ENCODE measurements at regions of chr7 and their contacts with region 1.

Region 1: DNA sequence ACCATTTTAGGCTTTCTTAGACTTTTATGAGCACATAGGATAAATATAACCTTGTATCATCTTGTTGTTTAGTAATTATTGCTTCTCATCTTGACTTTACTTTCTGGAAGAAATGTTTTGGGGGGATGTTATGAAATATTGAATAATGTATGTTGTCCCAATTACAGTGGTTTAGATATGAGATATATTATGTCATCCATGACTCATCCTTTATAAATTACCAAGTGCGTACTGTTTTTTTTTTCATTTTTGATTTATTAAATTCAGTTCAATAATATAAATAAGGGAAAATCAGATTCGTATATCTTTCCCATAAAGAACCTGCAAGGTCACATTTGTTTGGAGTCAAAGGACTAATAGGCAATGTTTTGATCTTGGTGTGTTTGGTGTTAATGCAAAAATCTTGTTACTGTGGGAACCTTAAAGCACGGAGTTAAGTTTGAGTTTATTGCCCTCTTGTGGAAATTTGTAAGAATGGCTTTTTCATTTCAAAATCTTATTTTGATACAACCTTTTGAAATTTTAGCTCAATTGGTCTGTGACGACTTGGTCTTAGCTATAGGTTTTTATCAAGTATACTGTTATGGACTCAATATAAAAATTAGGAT is 108.6 kb downstream of the SRI start:
- DNase-seq: no peak
- ATAC-seq: peak; percentile 74
- H3K4me3 ChIP-seq: no peak overlapping the region
- H3K27ac ChIP-seq: no peak overlapping the region
- H3K4me1 ChIP-seq: no peaks in the 10 kb centered on the region
- H3K27me3 ChIP-seq: no peaks in the 10 kb centered on the region
- CTCF ChIP-seq: peak; percentile 34 to 61 (median 44); a peak in 5 of 6 replicates
- EP300 ChIP-seq: no peak
- POLR2A ChIP-seq: no peak
- RAD21 ChIP-seq: peak; percentile 83

Region 2: GRCh38 chr7:87506246-87507180 is 604.7 kb before region 1 on chr7:
- CTCF ChIA-PET with region 1: interaction called, 17 read pairs
- POLR2A ChIA-PET with region 1: no interaction called
- RAD21 ChIA-PET with region 1: interaction called, 10 read pairs
- SMC1A ChIA-PET with region 1: interaction called, 5 read pairs
- in situ Hi-C with region 1: loop called (anchors 10 kb)
- intact Hi-C with region 1: loop called (anchors 5 kb)
- DNase-seq: no peak
- ATAC-seq: peak; percentile 57
- H3K4me3 ChIP-seq: no peak overlapping the region
- H3K27ac ChIP-seq: no peak overlapping the region
- H3K4me1 ChIP-seq: no peaks in the 10 kb centered on the region
- H3K27me3 ChIP-seq: no peaks in the 10 kb centered on the region
- CTCF ChIP-seq: peak; percentile 12 to 55 (median 31); a peak in 4 of 6 replicates
- EP300 ChIP-seq: no peak
- POLR2A ChIP-seq: no peak
- RAD21 ChIP-seq: peak; percentile 69

Region 3: DNA sequence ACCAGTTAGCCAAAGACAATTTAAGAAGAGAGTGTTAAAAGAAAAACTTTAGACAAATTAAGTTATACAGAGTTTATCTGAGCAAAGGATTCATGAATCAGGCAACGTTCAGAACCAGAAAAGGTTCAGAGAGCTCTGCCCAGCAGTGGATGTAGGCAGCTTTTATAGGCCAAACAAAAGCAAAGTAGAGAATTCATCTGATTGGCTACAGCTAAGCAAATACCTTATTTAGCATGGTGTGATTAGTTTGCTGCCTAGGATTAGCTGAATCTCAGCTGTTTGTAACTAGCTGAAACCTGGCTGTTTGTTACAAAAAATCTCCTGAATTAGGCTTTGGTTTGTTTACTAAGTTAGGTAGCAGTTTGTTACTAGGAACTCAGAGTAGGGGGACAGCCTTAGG is 301.1 kb before region 1 on chr7:
- CTCF ChIA-PET with region 1: interaction called, 10 read pairs
- POLR2A ChIA-PET with region 1: no interaction called
- RAD21 ChIA-PET with region 1: interaction called, 4 read pairs
- SMC1A ChIA-PET with region 1: interaction called, 4 read pairs
- in situ Hi-C with region 1: no loop called
- intact Hi-C with region 1: no loop called
- DNase-seq: no peak
- ATAC-seq: peak; percentile 28; the same call in 2 of the 3 replicates
- H3K4me3 ChIP-seq: no peak overlapping the region
- H3K27ac ChIP-seq: no peak overlapping the region
- H3K4me1 ChIP-seq: no peaks in the 10 kb centered on the region
- H3K27me3 ChIP-seq: no peaks in the 10 kb centered on the region
- CTCF ChIP-seq: no peak
- EP300 ChIP-seq: no peak
- POLR2A ChIP-seq: no peak
- RAD21 ChIP-seq: no peak

Region 4: GRCh38 chr7:87910138-87910537 is 201.1 kb before region 1 on chr7:
- CTCF ChIA-PET with region 1: interaction called, 3 read pairs
- POLR2A ChIA-PET with region 1: no interaction called
- RAD21 ChIA-PET with region 1: no interaction called
- SMC1A ChIA-PET with region 1: interaction called, 11 read pairs
- in situ Hi-C with region 1: no loop called
- intact Hi-C with region 1: no loop called
- DNase-seq: no peak
- ATAC-seq: peak; percentile 39; the same call in 2 of the 3 replicates
- H3K4me3 ChIP-seq: no peak overlapping the region
- H3K27ac ChIP-seq: no peak overlapping the region
- H3K4me1 ChIP-seq: no peaks in the 10 kb centered on the region
- H3K27me3 ChIP-seq: no peaks in the 10 kb centered on the region
- CTCF ChIP-seq: no peak
- EP300 ChIP-seq: no peak
- POLR2A ChIP-seq: 0 out of 2 replicates have a peak, but pooled peaks have one; percentile 9
- RAD21 ChIP-seq: no peak

Region 5: GRCh38 chr7:88090671-88091070 is 20.6 kb before region 1 on chr7:
- CTCF ChIA-PET with region 1: interaction called, 4 read pairs
- POLR2A ChIA-PET with region 1: no interaction called
- RAD21 ChIA-PET with region 1: interaction called, 4 read pairs
- SMC1A ChIA-PET with region 1: interaction called, 13 read pairs
- in situ Hi-C with region 1: no loop called
- intact Hi-C with region 1: no loop called
- DNase-seq: no peak
- ATAC-seq: peak; percentile 87
- H3K4me3 ChIP-seq: no peak overlapping the region
- H3K27ac ChIP-seq: no peak overlapping the region
- H3K4me1 ChIP-seq: no peaks in the 10 kb centered on the region; the same call in 1 of the 2 replicates
- H3K27me3 ChIP-seq: no peaks in the 10 kb centered on the region
- CTCF ChIP-seq: no peak
- EP300 ChIP-seq: no peak
- POLR2A ChIP-seq: no peak
- RAD21 ChIP-seq: no peak

Region 6: GRCh38 chr7:88127637-88128290 is 16.5 kb after region 1 on chr7:
- CTCF ChIA-PET with region 1: interaction called, 4 read pairs
- POLR2A ChIA-PET with region 1: interaction called, 3 read pairs
- RAD21 ChIA-PET with region 1: interaction called, 4 read pairs
- SMC1A ChIA-PET with region 1: interaction called, 11 read pairs
- in situ Hi-C with region 1: no loop called
- intact Hi-C with region 1: no loop called
- DNase-seq: no peak
- ATAC-seq: no peak
- H3K4me3 ChIP-seq: no peak overlapping the region
- H3K27ac ChIP-seq: no peak overlapping the region
- H3K4me1 ChIP-seq: peaks cover 4% of the 10 kb centered on the region
- H3K27me3 ChIP-seq: no peaks in the 10 kb centered on the region
- CTCF ChIP-seq: no peak
- EP300 ChIP-seq: no peak
- POLR2A ChIP-seq: no peak
- RAD21 ChIP-seq: no peak